Activated CD4-positive, alpha-beta memory T cell treated with anti-CD3 and anti-CD28 coated beads for 36 hours (primary cell): ENCODE measurements at regions of chr13 and their contacts with region 1.

Region 1: DNA sequence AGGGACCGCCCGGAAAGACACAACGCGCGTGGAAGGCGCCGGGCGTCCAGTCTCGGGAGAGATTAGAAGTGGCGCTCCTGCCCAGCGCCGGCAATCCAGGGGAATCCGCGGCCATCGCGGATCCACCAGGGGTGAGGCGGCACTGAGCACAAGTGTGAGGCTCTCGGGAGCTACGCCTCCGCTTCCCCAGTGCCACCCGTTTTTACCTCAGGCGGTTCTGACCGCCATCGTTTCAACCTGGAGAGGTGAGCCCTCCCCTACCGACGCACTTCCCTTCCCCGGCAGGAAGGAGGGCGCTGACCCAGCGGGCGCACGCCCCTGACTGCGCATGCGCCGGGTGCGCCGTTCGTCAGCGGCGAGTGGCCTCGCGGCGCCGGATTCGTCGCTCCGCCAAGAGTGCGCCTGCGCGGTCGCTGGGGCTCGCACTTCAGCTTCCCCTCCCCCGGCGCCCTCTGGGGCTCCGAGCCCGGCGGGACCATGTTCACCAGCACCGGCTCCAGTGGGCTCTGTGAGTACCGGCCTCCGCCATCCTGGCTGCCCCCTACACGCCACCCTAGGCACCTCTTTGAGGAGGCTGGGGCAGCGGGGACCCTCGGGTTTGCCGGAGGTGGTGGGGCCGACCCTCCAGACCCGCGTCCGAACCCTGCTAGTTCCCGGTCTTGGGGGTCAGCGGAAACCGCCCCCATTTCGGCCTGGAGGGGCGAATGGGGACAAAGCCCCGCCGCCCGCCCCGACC is at the start of gene UBAC2:
- DNase-seq: peak; percentile 97
- H3K4me3 Mint-ChIP-seq: peak within 1 kb of the TSS; percentile 90
- H3K27ac Mint-ChIP-seq: peak within 1 kb of the TSS; percentile 90
- H3K4me1 Mint-ChIP-seq: peaks cover 59% of the 10 kb centered on the region
- H3K27me3 Mint-ChIP-seq: no peaks in the 10 kb centered on the region
- total RNA-seq, gene UBAC2: 51.8 to 54.5 TPM

Region 2: DNA sequence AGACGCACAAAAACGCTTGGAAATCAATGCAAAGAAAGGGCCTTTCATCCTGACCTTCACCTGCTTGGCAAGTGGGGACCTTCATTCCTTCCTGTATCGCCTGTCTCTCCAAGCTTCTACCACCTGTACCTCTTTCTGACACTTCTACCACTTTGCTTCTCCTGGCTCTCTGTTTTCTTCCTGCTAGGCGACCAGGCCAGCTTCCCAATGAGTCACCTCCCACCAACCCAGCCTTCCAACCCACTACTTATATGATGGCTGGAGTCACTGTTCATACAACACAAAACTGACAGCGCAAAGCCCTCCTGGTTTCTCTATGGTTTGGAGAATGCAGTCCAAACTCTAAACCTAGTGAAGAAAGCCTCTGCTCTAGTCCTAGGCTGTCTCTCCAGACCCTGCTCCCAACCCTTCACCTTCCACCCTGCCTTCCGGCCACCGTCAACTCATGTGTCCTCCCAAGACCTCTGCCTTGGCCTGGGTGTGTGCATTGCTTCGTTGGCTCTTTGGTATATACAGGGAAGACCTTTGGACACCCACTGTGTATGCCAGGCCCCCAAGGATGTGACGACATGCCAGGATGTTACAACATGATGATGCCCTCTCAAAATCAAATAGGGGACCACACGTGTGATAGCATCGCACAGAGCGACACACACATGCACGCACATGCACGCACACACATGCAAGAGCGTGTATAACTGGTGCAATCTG is 772.2 kb before region 1 on chr13:
- CTCF ChIA-PET with region 1: no interaction called
- POLR2A ChIA-PET with region 1: no interaction called
- intact Hi-C with region 1: no loop called
- DNase-seq: no peak
- H3K4me3 Mint-ChIP-seq: no peak overlapping the region
- H3K27ac Mint-ChIP-seq: no peak overlapping the region
- H3K4me1 Mint-ChIP-seq: no peaks in the 10 kb centered on the region
- H3K27me3 Mint-ChIP-seq: peaks cover 24% of the 10 kb centered on the region

Region 3: DNA sequence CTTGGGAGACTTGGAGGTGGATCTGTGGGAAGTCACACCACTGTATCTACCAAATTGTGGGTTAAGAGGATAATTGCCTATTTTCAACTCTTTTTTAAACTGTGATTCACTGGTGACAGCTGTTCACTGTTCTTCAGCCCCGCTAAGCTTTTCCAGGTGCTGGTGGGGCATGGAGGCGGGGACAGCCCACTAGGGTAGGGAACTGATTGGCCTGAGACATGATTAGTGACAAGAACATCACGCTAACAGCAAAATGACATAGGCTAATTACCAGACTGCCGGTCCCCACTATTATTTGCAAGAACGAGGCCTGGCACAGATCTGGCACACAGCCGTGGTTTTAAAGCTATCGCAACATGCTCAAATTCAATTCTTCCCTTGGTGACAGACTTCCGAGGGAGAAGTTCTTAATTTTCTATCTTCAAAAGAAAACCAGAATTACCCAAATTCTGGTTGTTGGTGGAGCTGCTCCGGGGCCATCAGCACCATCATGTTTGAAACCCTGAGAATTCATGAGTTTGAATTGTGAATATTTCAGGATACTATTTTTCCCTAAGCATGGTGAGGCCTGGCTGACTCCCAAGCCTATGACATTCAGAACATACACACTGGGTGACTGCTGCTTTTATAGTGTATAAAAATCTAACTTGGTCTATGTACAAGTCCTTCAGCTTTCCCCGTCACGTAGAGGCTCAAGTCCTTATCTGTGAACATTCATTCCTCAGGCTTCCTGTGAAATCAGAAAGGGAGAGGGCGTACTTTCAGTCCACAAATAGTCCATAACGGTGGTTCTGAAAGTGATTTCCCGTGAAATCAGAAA is 240.6 kb before region 1 on chr13:
- CTCF ChIA-PET with region 1: no interaction called
- POLR2A ChIA-PET with region 1: no interaction called
- intact Hi-C with region 1: no loop called
- DNase-seq: no peak
- H3K4me3 Mint-ChIP-seq: no peak overlapping the region
- H3K27ac Mint-ChIP-seq: no peak overlapping the region
- H3K4me1 Mint-ChIP-seq: peaks cover 17% of the 10 kb centered on the region
- H3K27me3 Mint-ChIP-seq: no peaks in the 10 kb centered on the region

Region 4: DNA sequence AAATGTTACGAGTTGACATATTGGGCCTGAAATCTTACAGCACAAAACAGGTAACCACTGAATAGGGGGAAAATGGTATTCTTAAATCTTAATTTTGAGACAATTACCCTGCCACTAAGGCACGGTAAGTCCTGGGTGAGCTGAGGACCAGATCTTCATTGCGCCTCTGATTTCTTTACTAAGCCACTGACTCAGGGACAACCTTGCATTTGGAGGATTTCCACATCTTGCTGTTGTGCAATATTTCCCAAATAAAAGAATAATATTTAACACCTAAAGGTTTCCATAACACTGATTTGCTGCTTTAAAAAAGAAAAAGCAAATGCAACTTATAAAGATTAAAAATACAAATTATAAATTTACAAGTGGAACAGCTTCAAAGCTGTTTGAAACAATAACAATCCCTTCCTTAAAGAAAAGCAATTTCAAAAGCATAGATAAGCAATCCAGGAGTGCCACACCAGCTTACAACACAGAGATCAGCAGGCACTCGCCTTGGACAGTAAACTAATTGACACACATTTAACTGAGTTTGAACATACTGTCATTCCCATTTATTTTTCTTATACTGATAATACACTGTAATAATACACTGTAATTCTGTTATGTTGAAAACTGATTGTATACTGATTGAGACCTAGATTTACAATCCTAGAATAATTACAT is 143.2 kb before region 1 on chr13:
- CTCF ChIA-PET with region 1: no interaction called
- POLR2A ChIA-PET with region 1: interaction called, 3 read pairs
- intact Hi-C with region 1: loop called (anchors 5 kb)
- DNase-seq: no peak
- H3K4me3 Mint-ChIP-seq: no peak overlapping the region
- H3K27ac Mint-ChIP-seq: no peak overlapping the region
- H3K4me1 Mint-ChIP-seq: peaks cover 56% of the 10 kb centered on the region
- H3K27me3 Mint-ChIP-seq: no peaks in the 10 kb centered on the region

Region 5: GRCh38 chr13:99124794-99125316 is 75.7 kb before region 1 on chr13:
- CTCF ChIA-PET with region 1: no interaction called
- POLR2A ChIA-PET with region 1: interaction called, 4 read pairs
- intact Hi-C with region 1: loop called (anchors 2 kb)
- DNase-seq: peak; percentile 38
- H3K4me3 Mint-ChIP-seq: peak overlapping the region; percentile 58
- H3K27ac Mint-ChIP-seq: peak overlapping the region; percentile 71
- H3K4me1 Mint-ChIP-seq: peaks cover 45% of the 10 kb centered on the region
- H3K27me3 Mint-ChIP-seq: peaks cover 2% of the 10 kb centered on the region

Region 6: DNA sequence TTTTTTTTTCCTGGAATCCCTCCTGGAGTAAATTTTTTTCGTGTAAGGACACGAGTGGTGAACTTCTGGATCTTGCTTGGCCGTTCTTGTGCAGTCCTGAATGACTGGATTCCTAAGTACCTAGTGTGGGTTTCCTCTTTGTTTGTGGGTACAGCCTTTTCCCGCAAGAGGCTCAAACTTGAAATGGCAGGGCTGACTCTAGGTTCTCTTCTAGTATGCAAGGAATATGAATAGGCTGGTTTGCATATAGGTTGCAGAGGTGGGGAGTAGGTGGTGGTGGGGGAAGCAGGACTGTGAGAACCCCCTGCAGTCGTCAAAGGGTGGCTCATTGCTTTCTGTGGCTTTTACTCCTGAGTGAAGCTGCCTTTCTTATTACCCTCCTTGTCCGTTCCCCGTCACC is 13.6 kb after region 1 on chr13:
- CTCF ChIA-PET with region 1: interaction called, 15 read pairs
- POLR2A ChIA-PET with region 1: interaction called, 45 read pairs
- intact Hi-C with region 1: loop called (anchors 1 kb)
- DNase-seq: peak; percentile 84
- H3K4me3 Mint-ChIP-seq: peak overlapping the region; percentile 78
- H3K27ac Mint-ChIP-seq: peak overlapping the region; percentile 78
- H3K4me1 Mint-ChIP-seq: peaks cover 78% of the 10 kb centered on the region
- H3K27me3 Mint-ChIP-seq: no peaks in the 10 kb centered on the region

Region 7: DNA sequence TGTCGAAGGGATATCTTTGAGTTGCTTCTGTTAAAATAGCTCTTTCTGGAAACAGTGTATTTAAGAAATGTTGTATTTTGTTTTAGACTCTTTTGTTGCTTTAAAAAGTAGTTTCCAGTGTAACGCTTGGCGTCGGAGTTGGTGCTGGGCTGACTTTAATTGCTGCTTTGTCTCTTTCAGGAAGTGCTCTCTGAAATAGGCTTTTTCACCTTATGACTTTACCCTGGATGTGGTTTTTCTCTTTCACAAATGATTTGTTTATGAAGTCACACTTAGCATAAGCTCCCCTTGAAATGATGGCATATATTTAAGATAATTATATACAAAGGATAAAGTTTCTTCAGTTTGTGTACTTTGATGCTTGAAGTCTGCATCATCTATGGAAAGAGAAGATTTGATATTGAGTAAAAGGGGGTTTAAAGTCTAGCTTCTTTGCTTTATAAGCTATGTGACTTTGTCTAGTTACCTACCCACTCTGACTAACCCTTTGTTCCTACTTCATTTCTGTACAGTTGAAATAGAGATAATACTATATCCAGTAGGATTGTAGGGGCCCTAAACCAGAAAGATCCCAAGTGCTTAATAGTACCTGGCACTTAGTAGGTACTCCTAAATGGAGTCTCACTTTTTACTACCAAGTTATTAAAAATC is 57.7 kb after region 1 on chr13 and contains the start of gene GPR18:
- CTCF ChIA-PET with region 1: interaction called, 4 read pairs
- POLR2A ChIA-PET with region 1: interaction called, 22 read pairs
- intact Hi-C with region 1: loop called (anchors 1 kb)
- DNase-seq: peak; percentile 57
- H3K4me3 Mint-ChIP-seq: peak within 1 kb of the TSS; percentile 77
- H3K27ac Mint-ChIP-seq: peak within 1 kb of the TSS; percentile 90
- H3K4me1 Mint-ChIP-seq: peaks cover 76% of the 10 kb centered on the region
- H3K27me3 Mint-ChIP-seq: no peaks in the 10 kb centered on the region
- total RNA-seq, gene GPR18: 2.4 to 2.8 TPM

Region 8: DNA sequence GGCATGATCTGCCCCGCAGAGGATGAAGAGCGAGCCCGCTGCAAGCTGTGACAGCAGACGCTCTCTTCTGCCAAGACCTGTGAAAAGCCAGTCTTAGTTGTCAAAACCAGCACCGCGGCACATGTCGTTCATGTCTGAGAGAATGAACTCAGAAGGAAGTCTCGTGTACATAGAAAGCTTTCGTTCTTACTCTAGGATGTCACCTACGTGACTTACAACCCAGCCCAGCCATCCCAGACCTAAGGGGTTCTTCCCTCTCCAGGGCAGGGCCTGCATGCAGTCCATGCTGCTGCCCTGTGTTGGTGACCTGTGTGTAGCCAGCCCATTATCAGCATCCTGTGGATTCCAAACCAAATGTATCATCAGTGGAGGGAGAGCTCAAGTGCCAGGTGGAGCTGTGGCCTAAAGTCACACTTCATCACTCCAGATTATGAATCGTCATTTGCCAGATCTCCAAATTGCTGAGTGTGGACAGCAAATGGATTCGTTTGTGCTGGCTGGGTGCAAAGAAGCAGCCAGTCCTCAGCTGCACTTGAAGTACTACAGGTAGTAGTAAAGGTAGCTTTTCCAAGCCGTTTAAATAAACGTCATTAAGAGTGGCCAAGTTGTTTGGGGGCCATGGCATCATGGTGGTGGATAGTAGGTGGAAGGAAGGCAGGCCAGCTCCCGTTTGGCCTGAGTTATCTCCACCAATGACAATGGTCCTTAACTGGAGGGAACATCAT is 180.5 kb after region 1 on chr13:
- CTCF ChIA-PET with region 1: no interaction called
- POLR2A ChIA-PET with region 1: interaction called, 5 read pairs
- intact Hi-C with region 1: loop called (anchors 5 kb)
- DNase-seq: peak; percentile 87
- H3K4me3 Mint-ChIP-seq: peak overlapping the region; percentile 36
- H3K27ac Mint-ChIP-seq: peak overlapping the region; percentile 89
- H3K4me1 Mint-ChIP-seq: peaks cover 84% of the 10 kb centered on the region
- H3K27me3 Mint-ChIP-seq: no peaks in the 10 kb centered on the region

Region 9: DNA sequence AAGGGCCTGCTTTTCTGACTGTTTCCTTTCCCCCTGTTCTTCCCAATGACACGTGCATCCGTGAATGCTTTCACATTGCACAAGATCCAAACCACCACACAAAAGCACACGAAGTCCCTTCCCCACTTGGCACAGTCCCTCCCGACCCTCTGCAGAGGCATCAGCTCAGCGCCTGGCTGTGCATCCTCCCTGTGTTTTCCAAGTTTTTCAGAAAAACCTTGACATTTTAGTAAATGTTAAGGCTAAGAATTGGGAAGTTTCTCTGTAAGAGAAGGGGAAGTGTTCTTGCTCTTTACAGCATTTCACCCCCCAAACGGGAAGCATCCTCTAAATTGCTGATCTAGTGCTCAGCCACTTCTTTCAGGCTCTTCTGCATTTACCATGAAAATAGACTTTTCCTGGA is 206.2 kb after region 1 on chr13:
- CTCF ChIA-PET with region 1: no interaction called
- POLR2A ChIA-PET with region 1: no interaction called
- intact Hi-C with region 1: no loop called
- DNase-seq: no peak
- H3K4me3 Mint-ChIP-seq: no peak overlapping the region
- H3K27ac Mint-ChIP-seq: no peak overlapping the region
- H3K4me1 Mint-ChIP-seq: peaks cover 13% of the 10 kb centered on the region
- H3K27me3 Mint-ChIP-seq: no peaks in the 10 kb centered on the region